ENCODE measurements at regions of chr13 and their contacts with region 1.

Region 1: GRCh38 chr13:33285420-33286124 is at the start of gene STARD13:
- DNase-seq: peak; percentile 98
- H3K4me3 ChIP-seq: peak within 1 kb of the TSS; percentile 79 to 98 (median 88)
- H3K27ac ChIP-seq: peak within 1 kb of the TSS; percentile 99
- H3K4me1 ChIP-seq: peaks cover 30% of the 10 kb centered on the region
- H3K27me3 ChIP-seq: no peaks in the 10 kb centered on the region
- CTCF ChIP-seq: peak; percentile 29 to 49
- POLR2A ChIP-seq: peak; percentile 85
- total RNA-seq, gene STARD13: 41.1 and 47.7 TPM in 2 replicates

Region 2: GRCh38 chr13:33125821-33126570 is 159.6 kb before region 1 on chr13:
- CTCF ChIA-PET with region 1: no interaction called
- POLR2A ChIA-PET with region 1: no interaction called
- dilution Hi-C with region 1: no loop called
- intact Hi-C with region 1: loop called (anchors 1 kb)
- DNase-seq: peak; percentile 94
- H3K4me3 ChIP-seq: no peak overlapping the region
- H3K27ac ChIP-seq: peak overlapping the region; percentile 93
- H3K4me1 ChIP-seq: peaks cover 51% of the 10 kb centered on the region
- H3K27me3 ChIP-seq: no peaks in the 10 kb centered on the region
- CTCF ChIP-seq: no peak
- POLR2A ChIP-seq: peak; percentile 48

Region 3: GRCh38 chr13:33188093-33188882 is 97.3 kb before region 1 on chr13:
- CTCF ChIA-PET with region 1: interaction called, 3 read pairs
- POLR2A ChIA-PET with region 1: no interaction called
- dilution Hi-C with region 1: no loop called
- intact Hi-C with region 1: loop called (anchors 1 kb)
- DNase-seq: peak; percentile 45
- H3K4me3 ChIP-seq: no peak overlapping the region
- H3K27ac ChIP-seq: peak overlapping the region; percentile 84
- H3K4me1 ChIP-seq: peaks cover 50% of the 10 kb centered on the region
- H3K27me3 ChIP-seq: no peaks in the 10 kb centered on the region
- CTCF ChIP-seq: no peak
- POLR2A ChIP-seq: no peak

Region 4: DNA sequence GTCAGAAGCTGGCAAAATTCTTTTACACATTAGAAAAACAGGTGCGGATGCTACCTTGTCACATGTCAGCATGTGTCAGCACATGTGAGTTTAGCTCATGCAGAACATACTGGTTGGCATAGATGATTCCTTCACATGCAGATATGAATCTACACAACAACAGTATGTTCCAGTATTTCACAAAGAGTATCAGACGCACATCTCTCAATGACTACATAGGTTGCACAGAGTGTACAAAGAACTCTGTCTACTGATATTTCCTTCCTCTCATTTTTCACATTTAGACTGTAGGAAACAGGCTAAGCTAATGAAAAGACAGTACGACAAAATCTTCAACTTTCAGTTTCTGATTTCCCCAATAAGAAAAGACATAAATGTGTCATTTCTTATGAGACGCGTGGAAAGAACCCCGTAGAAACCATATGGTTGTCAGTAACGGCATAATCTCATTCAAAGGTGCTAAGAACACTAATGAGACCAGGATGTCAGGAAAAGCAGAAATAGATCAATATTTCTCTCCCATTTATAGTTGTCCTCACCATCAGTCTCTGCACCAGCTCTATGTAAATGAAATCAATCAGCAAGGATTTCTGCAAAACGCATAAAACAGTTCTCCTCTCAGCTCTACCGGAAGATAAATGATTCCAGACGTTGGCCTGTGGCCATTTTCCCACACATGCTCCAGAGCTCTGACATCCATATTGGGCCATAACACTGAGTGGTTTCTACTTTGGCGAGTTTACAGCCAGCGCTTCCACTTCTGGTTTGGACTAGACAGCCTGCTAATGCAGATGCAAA is 81.2 kb before region 1 on chr13:
- CTCF ChIA-PET with region 1: no interaction called
- POLR2A ChIA-PET with region 1: no interaction called
- dilution Hi-C with region 1: no loop called
- intact Hi-C with region 1: loop called (anchors 1 kb)
- DNase-seq: peak; percentile 89
- H3K4me3 ChIP-seq: no peak overlapping the region
- H3K27ac ChIP-seq: peak overlapping the region; percentile 76
- H3K4me1 ChIP-seq: peaks cover 54% of the 10 kb centered on the region
- H3K27me3 ChIP-seq: no peaks in the 10 kb centered on the region
- CTCF ChIP-seq: no peak
- POLR2A ChIP-seq: no peak

Region 5: GRCh38 chr13:33251131-33251661 is 34.4 kb before region 1 on chr13:
- CTCF ChIA-PET with region 1: interaction called, 6 read pairs
- POLR2A ChIA-PET with region 1: interaction called, 9 read pairs
- dilution Hi-C with region 1: no loop called
- intact Hi-C with region 1: loop called (anchors 1 kb)
- DNase-seq: peak; percentile 87
- H3K4me3 ChIP-seq: peak overlapping the region in 1 of 3 experiments; percentile 3
- H3K27ac ChIP-seq: peak overlapping the region; percentile 85
- H3K4me1 ChIP-seq: peaks cover 44% of the 10 kb centered on the region
- H3K27me3 ChIP-seq: no peaks in the 10 kb centered on the region
- CTCF ChIP-seq: no peak
- POLR2A ChIP-seq: no peak

Region 6: DNA sequence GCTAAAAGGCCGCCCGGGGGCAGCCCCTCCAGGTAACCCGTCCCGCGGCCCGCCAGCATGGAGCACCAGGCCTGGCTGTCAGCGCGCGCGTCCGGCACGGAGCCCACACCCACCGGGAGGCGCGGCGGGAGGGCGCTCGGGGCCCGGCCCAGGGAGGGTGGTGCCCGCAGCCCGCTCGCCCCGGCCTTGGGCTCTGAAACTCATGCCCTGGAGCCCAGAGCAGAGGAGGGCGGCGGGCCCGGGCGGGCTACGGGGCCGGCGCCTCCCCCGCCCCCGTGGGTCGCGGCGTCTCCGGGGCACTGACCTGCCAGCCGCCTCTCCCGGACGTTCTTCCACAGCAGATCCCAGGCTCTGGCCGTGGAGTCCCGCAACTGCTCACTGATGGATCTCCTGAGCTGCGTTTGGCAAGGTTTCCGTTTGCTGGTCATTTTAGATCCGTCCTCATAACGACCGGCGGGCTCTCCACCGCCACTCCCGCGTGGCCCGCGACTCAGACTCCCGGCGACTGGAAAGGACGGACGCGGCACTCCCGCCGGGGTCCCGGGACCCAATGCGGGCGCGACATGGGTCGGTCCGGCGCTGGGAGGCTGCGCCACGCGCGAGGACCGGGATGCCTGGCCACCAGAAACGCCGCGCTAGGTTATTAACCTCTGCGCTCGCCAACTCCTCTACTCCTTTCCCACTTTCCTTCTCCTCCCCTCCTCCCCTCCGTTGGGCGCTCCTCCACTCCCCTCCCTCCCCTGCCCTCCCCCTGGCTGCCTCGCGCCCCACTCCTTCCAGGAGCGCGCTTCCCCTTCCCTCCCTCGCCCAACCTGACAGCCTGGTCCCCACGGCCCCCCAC is 64.6 kb after region 1 on chr13:
- CTCF ChIA-PET with region 1: interaction called, 5 read pairs
- POLR2A ChIA-PET with region 1: no interaction called
- dilution Hi-C with region 1: no loop called
- intact Hi-C with region 1: loop called (anchors 1 kb)
- DNase-seq: peak; percentile 49
- H3K4me3 ChIP-seq: peak overlapping the region; percentile 78 to 86 (median 82)
- H3K27ac ChIP-seq: peak overlapping the region; percentile 78
- H3K4me1 ChIP-seq: peaks cover 16% of the 10 kb centered on the region
- H3K27me3 ChIP-seq: no peaks in the 10 kb centered on the region
- CTCF ChIP-seq: no peak
- POLR2A ChIP-seq: no peak

Region 7: DNA sequence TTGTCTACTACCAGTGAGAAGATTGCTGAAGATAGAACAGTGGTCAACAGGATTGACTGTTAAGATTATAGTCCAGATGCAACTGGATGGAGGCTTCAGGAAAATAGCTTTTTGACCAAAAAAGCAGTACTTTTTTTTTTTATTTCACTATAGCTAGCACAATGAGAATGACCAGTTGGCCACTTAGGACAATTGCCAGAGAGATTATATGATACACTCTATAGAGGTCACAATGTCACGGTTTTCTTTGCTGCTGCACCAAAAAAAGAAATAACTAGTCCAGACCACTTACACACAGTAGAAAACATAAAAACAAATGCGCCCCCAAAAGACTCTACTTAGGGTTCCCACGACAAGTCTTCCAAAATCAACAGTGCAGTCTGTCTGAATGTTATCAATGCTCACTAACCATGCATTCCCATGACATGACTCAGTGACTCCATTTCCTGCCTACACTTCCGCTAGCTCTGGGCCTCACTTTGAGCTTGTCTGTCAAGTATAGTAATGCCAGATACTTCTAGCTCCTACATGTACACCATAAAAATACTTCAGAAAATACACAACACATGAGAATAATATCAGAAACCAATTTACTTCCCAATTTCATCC is 209.1 kb after region 1 on chr13:
- CTCF ChIA-PET with region 1: interaction called, 9 read pairs
- POLR2A ChIA-PET with region 1: interaction called, 5 read pairs
- dilution Hi-C with region 1: no loop called
- intact Hi-C with region 1: loop called (anchors 1 kb)
- DNase-seq: peak; percentile 99
- H3K4me3 ChIP-seq: peak overlapping the region in 1 of 3 experiments; percentile 26
- H3K27ac ChIP-seq: peak overlapping the region; percentile 98
- H3K4me1 ChIP-seq: peaks cover 66% of the 10 kb centered on the region
- H3K27me3 ChIP-seq: no peaks in the 10 kb centered on the region
- CTCF ChIP-seq: no peak
- POLR2A ChIP-seq: peak; percentile 71

Measured in endothelial cell of umbilical vein (primary cell).